ENCODE measurements at regions of chr4 and their contacts with region 1.

Region 1: GRCh38 chr4:18021722-18022571 is at the start of gene LCORL:
- DNase-seq: peak; percentile 95
- ATAC-seq: peak; percentile 77
- H3K4me3 ChIP-seq: peak within 1 kb of the TSS; percentile 71 to 98 (median 85)
- H3K4me3 Mint-ChIP-seq: peak within 1 kb of the TSS; percentile 96
- H3K27ac ChIP-seq: peak within 1 kb of the TSS; percentile 86 to 88
- H3K27ac Mint-ChIP-seq: peak within 1 kb of the TSS; percentile 98
- H3K4me1 ChIP-seq: peaks cover 14 to 18% of the 10 kb centered on the region in 2 donors
- H3K4me1 Mint-ChIP-seq: peaks cover 22% of the 10 kb centered on the region
- H3K27me3 ChIP-seq: peaks cover 0 to 5% (median 0%) of the 10 kb centered on the region in 4 experiments
- H3K27me3 Mint-ChIP-seq: peaks cover 3% of the 10 kb centered on the region
- CTCF ChIP-seq: peak; percentile 15
- total RNA-seq, gene LCORL: 30.4 and 31.3 TPM in 2 replicates

Region 2: DNA sequence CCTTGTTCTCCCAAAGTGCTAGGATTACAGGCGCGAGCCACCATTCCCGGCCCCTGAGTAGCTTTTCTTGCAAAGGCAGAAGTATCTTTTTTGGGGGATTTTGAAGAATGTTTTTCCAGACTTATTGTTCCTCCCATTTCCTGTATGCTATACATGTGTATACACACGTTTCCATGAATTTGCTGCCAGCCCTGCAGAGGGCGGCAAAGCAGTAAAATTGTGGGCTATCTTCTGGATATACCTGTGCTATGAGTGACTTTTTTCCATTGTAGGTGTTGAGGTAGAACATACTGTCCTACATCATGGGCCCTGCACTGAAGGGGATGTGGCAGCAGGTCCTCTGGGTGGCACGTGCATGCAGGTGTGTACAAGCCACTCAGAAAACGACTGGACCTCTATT is 424.4 kb before region 1 on chr4:
- CTCF ChIA-PET with region 1: no interaction called
- POLR2A ChIA-PET with region 1: no interaction called
- intact Hi-C with region 1: loop called (anchors 5 kb)
- DNase-seq: no peak
- ATAC-seq: no peak
- H3K4me3 ChIP-seq: no peak overlapping the region
- H3K4me3 Mint-ChIP-seq: no peak overlapping the region
- H3K27ac ChIP-seq: no peak overlapping the region
- H3K27ac Mint-ChIP-seq: no peak overlapping the region
- H3K4me1 ChIP-seq: peaks cover 16 to 28% of the 10 kb centered on the region in 2 donors
- H3K4me1 Mint-ChIP-seq: peaks cover 30% of the 10 kb centered on the region
- H3K27me3 ChIP-seq: no peaks in the 10 kb centered on the region
- H3K27me3 Mint-ChIP-seq: no peaks in the 10 kb centered on the region
- CTCF ChIP-seq: no peak

Region 3: DNA sequence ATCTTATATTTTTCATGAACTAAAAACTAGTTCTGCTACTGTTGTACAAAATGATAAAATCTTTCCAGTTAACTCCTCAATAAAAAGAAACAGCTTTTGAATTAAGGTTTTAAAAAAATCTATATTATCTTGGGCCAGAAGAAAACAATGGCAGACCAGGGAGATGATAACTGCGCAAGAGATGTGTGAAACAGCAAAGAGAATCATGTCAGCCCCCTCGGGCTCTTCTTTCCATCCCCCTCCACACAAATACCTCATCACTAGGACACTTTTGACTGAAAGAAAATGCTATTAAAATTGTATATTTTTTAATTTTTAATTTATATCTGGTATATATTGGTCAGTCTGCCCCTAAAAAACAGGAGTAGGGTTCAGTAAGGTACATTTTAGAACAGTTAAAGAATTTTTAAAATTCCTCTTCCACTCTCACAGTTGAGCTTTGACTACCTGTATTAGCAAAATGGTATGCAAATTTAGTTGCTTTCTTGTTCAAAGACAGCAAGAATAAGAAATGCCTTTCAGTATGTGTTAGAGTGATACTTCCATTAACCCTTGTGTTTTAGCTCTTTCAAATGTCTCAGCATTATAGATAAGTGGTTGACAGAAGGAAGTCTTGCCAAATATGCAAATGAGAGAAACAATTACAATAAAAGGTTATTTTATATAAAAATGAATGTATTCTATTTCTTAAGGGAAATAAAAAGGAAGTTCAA is 36.0 kb after region 1 on chr4:
- CTCF ChIA-PET with region 1: no interaction called
- POLR2A ChIA-PET with region 1: no interaction called
- intact Hi-C with region 1: loop called (anchors 2 kb)
- DNase-seq: no peak
- ATAC-seq: no peak
- H3K4me3 ChIP-seq: peak overlapping the region in 3 of 5 experiments; percentile 51 to 68 (median 52)
- H3K4me3 Mint-ChIP-seq: peak overlapping the region; percentile 42
- H3K27ac ChIP-seq: no peak overlapping the region
- H3K27ac Mint-ChIP-seq: no peak overlapping the region
- H3K4me1 ChIP-seq: peaks cover 8 to 12% of the 10 kb centered on the region in 2 donors
- H3K4me1 Mint-ChIP-seq: peaks cover 14% of the 10 kb centered on the region
- H3K27me3 ChIP-seq: no peaks in the 10 kb centered on the region
- H3K27me3 Mint-ChIP-seq: peaks cover 3% of the 10 kb centered on the region
- CTCF ChIP-seq: no peak

Measured in B cell (primary cell).